ENCODE measurements at regions of chr2 and their contacts with region 1.

Region 1: DNA sequence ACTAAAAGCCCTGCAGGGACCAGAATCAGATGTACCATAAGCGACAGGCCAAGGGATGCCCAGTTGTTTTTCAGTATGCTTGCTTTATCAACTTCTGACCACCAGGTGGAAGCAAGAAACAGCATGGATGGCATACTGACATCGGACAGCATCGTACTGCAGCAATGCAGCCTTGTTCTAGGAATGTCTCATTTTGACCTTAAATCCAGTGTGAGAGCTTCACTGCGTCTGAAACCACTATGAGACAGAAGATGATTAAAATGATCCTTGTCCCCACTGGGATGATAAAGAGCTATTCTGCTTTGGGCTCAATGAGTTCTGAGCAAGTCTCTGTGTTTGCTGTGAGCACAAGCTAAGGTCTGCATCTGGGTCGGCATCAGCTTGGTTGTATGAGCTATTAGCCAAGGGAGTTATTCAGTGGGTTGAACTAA is 54.3 kb downstream of the CDK15 start:
- DNase-seq: no peak

Region 2: DNA sequence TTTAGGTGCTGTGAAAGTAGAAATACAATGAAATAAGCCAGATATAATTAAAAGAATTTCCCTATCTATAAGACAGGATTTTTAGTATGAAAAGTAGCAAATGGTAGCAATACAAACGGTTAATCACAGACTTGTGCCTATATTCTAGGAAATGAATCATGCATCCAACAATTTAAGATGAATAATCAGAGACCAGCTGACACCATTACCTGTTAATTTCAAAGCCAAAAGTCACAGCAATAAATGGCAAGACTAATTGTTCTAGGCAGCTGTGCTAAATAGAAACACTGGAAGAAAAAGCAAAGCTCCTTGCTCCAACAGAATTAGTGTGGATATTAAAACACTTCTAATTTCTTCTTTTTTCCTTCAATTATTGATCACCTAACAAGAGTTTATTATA is 127.1 kb before region 1 on chr2:
- intact Hi-C with region 1: no loop called
- DNase-seq: no peak

Region 3: GRCh38 chr2:201795607-201796477 is 64.8 kb before region 1 on chr2:
- intact Hi-C with region 1: loop called (anchors 5 kb)
- DNase-seq: no peak

Region 4: GRCh38 chr2:202056392-202057010 is 195.8 kb after region 1 on chr2:
- intact Hi-C with region 1: loop called (anchors 5 kb)
- DNase-seq: no peak

Region 5: DNA sequence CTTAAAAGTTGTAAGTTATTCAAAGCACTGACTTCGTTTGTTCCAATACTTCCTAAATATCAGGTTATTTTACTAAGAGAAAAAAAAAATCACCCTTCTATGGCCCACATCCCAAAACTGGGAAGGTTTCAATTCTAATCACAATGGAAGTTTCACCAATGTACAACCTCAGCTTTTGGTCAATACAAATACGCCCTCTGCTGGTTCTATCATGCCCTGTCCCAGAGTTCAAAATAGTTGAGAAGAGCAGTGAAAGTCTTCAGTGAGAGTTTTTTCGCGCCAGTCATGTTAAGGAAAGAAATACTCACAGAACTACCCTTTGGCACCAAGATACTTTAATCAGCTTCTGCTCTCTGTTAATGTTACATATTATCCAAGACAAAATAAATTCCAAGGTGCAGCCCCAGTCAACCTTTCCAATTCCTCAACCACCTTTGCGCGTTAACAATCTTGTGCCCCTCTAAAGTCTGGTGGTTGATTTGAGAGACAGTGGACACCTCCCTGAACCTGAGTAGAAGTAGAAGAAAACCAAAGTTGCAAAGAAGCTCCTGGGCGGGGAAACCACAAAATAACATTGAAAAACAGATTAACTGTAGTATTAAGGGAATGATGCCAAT is 317.8 kb after region 1 on chr2:
- intact Hi-C with region 1: loop called (anchors 2 kb)
- DNase-seq: no peak

Region 6: DNA sequence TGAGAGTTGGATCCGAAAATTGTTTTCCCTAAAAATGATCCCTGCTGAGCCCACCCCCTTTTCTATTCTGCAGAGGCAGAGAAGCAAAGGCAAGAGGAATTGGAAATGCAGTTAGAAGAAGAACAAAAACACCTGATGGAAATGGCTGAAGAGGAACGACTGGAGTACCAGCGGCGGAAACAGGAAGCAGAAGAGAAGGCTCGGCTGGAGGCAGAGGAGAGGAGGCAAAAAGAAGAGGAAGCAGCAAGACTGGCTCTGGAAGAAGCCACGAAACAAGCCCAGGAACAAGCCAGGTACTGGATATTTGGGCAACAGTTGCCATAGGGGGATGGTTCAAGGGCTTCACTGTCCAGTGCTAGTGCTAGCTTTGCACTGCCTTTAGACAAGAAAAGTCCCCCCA is 336.1 kb after region 1 on chr2:
- intact Hi-C with region 1: no loop called
- DNase-seq: no peak

Measured in cardiac septum (tissue), 1 donor.